ENCODE measurements at regions of chr7 and their contacts with region 1.

Region 1: DNA sequence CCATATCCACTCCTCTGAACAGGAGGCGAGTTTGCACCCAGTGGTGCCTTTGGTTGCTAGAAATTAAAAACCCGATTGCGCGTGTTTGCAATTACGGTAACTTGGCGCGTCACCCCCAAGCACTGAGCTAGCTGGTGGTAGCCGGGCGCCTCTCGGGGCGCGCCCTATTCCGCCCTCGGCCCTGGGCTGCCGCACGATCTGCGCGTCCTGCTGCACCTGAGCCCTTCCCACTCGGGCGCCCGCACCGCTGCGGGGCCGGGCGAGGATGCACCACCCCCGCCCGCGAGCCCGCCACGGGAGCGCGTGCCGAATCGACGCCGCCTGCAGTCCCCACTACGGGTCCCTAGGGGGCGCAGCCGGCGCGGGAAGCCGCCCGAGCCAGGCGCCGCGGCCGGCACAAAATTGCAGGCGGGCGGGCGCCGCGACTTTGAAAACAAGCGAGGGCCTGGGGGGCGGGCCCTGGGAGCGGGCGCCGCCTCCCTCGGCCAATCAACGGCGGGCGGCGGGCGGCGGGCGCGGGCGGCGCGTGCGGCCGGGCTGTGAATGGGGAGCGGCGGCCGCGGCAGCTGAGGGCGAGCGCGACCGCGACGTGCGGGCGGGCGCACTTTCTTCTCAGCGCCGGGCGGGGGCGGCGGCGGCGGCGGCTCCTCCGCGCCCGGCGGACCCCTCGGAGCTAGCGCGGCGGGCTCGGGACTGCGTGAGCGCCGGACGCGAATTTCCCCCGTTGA is at the start of gene SDK1:
- DNase-seq: peak; percentile 90
- ATAC-seq: peak; percentile 90
- H3K4me3 Mint-ChIP-seq: peak within 1 kb of the TSS; percentile 70
- H3K27ac Mint-ChIP-seq: no peak within 1 kb of the TSS
- H3K4me1 Mint-ChIP-seq: peaks cover 7% of the 10 kb centered on the region
- H3K27me3 Mint-ChIP-seq: peaks cover 42% of the 10 kb centered on the region
- total RNA-seq, gene SDK1: 0.03 to 0.05 TPM

Region 2: GRCh38 chr7:3154912-3155494 is 145.8 kb before region 1 on chr7:
- CTCF ChIA-PET with region 1: no interaction called
- POLR2A ChIA-PET with region 1: no interaction called
- DNase-seq: peak; percentile 80
- ATAC-seq: no peak
- H3K4me3 Mint-ChIP-seq: no peak overlapping the region
- H3K27ac Mint-ChIP-seq: peak overlapping the region; percentile 24
- H3K4me1 Mint-ChIP-seq: peaks cover 26% of the 10 kb centered on the region
- H3K27me3 Mint-ChIP-seq: peaks cover 9% of the 10 kb centered on the region

Region 3: DNA sequence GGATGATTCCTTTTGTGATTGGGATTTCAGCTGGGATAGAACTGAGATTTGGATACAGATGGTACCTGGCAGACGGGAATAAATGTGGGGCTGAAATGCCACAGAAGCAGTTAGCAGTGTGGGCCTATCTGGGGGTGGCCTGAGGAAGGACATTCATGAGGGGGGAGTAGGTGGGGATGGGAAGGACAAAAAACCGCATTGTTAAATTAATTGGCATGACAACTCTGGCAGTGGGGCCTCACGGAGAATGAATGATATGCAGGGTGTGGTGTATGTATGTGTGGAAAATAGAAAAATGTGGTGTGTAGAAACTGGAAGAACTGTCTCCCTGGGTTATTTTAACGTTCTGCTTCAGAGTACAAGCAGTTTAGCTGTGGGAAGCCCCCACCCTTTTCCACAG is 18.1 kb after region 1 on chr7:
- CTCF ChIA-PET with region 1: no interaction called
- POLR2A ChIA-PET with region 1: no interaction called
- DNase-seq: no peak
- ATAC-seq: no peak
- H3K4me3 Mint-ChIP-seq: no peak overlapping the region
- H3K27ac Mint-ChIP-seq: no peak overlapping the region
- H3K4me1 Mint-ChIP-seq: no peaks in the 10 kb centered on the region
- H3K27me3 Mint-ChIP-seq: peaks cover 16% of the 10 kb centered on the region

Region 4: DNA sequence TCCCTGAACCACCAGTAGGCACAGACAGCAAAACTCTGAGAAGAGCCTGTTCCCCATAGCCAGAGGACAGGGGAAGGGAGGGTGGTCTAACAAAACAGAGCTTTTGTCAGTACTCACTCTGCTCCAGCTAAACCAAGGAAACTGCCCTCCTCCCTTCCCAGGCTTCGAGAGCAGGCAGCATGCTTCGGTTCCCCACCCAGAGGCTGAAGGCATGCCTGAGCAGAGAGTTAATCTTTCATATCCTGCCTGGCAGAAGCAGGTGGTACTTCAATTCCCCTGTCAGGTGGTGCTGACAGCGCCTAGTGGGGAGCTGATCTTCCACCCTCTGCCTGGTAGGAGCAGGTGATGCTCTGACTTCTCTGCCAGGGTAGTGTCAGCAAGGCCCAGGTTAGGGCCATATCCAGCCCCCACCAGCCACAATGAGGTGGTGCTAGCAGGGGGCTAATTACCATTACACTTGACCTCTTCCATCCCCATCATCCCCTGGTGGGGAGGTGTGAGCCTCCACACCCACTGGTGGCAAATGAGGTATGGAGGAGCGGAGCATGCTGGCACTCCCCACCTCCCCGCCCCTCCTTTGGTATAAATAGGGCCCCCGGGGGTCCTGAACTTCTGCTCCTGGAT is 35.3 kb after region 1 on chr7:
- CTCF ChIA-PET with region 1: no interaction called
- POLR2A ChIA-PET with region 1: no interaction called
- DNase-seq: no peak
- ATAC-seq: no peak
- H3K4me3 Mint-ChIP-seq: no peak overlapping the region
- H3K27ac Mint-ChIP-seq: no peak overlapping the region
- H3K4me1 Mint-ChIP-seq: no peaks in the 10 kb centered on the region
- H3K27me3 Mint-ChIP-seq: peaks cover 20% of the 10 kb centered on the region

Region 5: DNA sequence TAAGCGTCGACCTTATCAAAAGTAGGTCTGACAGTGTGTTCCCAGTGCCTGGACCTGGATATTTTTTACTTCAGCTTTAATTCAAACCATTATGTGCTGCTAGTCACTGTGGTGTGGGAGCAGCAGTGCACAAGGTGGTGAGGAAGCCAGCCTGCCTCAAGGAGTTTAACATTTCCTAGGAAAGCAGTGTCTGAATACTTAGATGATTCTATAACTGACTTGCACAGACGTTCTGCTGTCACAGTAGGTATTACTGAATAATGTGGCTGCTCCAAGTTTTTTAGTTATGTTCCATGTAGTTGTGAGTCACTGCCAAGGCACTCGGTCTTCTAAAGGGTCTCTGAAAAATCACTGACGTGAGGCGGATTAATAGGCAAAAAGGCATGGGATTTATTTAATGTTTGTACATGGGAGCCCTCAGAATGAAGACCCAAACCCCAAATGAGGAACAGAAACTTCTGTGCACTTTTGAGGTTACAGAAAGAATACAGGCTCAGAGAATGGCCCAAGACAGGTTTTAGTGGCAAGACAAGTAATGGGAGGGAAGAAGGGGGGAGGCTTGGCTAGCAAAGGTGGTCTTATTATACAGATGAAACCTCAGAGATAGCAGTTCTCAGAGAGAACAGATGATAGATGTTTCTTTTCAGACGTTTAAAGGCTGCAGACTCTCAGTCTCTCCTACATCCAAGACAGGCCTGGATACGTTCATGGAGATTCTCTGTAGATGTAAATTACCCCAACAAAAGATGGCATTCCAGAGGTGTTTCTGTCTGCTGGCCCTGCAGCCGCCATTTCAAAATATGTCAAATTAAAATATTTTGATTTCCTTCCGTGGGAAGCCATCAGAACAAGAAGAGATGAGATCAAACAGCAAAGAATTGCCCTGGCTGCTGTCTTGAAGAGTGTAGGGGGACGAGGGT is 209.5 kb after region 1 on chr7:
- CTCF ChIA-PET with region 1: no interaction called
- POLR2A ChIA-PET with region 1: no interaction called
- DNase-seq: no peak
- ATAC-seq: no peak
- H3K4me3 Mint-ChIP-seq: no peak overlapping the region
- H3K27ac Mint-ChIP-seq: no peak overlapping the region
- H3K4me1 Mint-ChIP-seq: no peaks in the 10 kb centered on the region
- H3K27me3 Mint-ChIP-seq: peaks cover 4% of the 10 kb centered on the region

Region 6: GRCh38 chr7:3673524-3673923 is 372.7 kb after region 1 on chr7:
- CTCF ChIA-PET with region 1: interaction called, 13 read pairs
- POLR2A ChIA-PET with region 1: no interaction called
- DNase-seq: peak; percentile 45
- ATAC-seq: no peak
- H3K4me3 Mint-ChIP-seq: no peak overlapping the region
- H3K27ac Mint-ChIP-seq: no peak overlapping the region
- H3K4me1 Mint-ChIP-seq: no peaks in the 10 kb centered on the region
- H3K27me3 Mint-ChIP-seq: no peaks in the 10 kb centered on the region